ENCODE measurements at regions of chr4 and their contacts with region 1.

Region 1: DNA sequence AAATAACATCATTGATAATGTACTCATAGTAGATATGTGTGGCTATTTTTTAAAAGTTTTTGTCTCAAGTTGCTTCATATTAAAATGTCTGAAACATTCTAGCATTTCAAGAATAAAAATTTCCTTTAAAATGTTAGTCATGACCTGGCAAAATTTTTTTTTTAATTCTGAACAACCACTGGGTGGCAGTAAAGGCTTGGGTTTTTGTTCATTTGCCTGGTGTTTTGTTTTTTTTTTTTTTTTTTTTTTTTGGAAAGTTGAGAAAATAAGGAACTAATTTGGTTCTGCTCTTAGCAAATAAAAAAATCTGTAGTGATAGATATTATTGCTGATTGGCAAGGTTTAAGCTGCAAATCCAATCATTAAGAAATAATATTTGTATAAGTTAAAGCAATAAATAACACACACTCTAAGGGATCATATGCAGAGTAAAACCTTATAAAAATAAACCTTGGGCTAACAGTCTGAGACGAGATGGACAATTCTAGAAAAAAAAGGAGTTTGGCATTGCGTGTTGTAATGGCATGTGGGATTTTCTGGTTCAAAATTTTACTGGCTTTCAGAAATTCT is 81.4 kb downstream of the CEP44 start:
- DNase-seq: peak; percentile 60

Region 2: GRCh38 chr4:173859091-173859713 is 505.9 kb before region 1 on chr4:
- in situ Hi-C with region 1: no loop called
- DNase-seq: no peak

Region 3: GRCh38 chr4:174173360-174173759 is 191.7 kb before region 1 on chr4:
- in situ Hi-C with region 1: no loop called
- DNase-seq: no peak

Region 4: DNA sequence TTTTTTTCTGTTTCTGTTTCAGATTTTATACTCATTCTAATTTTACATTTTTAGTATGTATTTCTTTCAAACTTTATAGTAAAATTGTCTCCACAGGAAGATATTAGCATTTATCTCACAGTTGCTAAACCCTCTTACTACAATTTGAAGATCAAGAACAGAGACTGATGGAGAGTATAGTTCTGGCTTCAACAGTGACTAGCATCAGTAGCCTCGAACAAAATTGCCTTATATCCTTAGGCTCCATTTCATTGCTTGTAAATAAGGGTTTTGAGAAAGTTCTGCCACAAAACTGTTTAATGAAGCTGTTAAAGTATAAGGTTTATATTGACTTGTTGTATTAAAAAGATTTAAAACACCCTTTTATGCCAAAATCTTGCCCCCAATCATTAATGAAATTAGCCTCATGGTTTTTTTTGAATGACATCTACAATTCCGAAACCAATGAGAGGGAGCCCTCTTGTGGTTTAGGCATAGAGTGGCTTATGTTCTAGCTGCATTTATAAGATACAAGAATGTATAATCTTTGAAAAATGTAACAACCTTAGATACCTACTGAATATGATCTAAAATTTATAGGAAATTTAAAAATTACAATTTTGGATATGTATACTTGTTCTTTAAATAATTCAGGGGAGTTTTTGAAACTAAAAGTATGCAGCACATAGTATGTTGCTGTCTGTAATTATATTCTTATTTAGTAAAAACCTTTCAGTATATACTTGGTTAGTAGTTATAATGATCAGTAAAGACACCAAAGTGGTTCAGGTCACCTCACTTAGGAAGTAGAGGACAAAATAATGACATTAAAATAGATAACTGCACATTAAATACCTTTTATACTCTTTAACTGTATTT is 267.0 kb after region 1 on chr4:
- in situ Hi-C with region 1: loop called (anchors 25 kb)
- DNase-seq: peak; percentile 42

Measured in KBM-7 (cell line).